Activated naive CD4-positive, alpha-beta T cell treated with anti-CD3 and anti-CD28 coated beads for 36 hours (primary cell): ENCODE measurements at regions of chr4 and their contacts with region 1.

Region 1: GRCh38 chr4:17810260-17811077 is at the starts of genes DCAF16 and NCAPG:
- DNase-seq: peak; percentile 100
- H3K4me3 Mint-ChIP-seq: peak within 1 kb of the TSS; percentile 100
- H3K27ac Mint-ChIP-seq: peak within 1 kb of the TSS; percentile 99
- H3K4me1 Mint-ChIP-seq: peaks cover 41% of the 10 kb centered on the region
- H3K27me3 Mint-ChIP-seq: no peaks in the 10 kb centered on the region
- total RNA-seq, gene DCAF16: 46.6 to 48.5 TPM
- total RNA-seq, gene NCAPG: 70.2 to 78.4 TPM

Region 2: DNA sequence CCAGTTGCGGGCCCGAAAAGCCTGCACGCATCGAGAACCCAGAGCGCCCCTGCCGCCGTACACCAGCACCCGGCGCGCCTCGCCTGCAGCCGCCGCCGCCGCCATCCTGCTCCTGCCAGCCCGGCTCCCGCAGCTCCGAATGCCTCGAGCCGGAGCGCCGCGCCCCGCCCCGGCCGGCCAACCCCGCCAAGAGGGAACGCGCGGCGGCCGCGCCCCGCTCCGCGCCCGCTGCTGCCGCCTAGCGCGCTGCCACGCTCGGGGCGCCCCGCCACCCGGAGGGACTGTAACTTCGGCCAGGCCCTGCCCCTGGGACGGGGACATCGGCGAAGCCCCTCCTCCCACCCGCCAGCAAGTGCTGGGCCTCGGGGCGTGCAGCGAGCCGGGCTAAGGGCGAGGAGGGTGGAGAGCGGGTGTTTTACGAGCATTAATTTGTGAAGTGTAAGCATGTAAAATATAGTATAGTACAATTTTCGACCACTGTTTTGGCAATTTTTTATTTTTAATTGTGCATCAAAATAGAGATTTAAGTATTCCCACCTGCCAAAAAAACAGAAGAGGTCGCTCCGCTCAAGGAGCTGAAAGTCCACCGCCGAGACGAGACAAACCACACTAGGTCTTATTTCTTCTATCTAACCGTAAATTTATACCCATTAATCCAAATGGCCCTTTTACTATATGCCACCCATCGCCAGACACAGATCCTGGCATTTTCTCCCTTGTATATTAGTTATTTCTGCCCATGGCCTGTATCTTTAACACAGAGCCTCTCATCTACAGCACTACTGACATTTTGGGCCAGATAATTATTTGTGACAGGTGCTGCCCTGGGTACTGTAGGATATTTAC is 298.3 kb before region 1 on chr4 and contains the start of gene QDPR:
- CTCF ChIA-PET with region 1: no interaction called
- intact Hi-C with region 1: loop called (anchors 1 kb)
- DNase-seq: peak; percentile 76
- H3K4me3 Mint-ChIP-seq: peak within 1 kb of the TSS; percentile 89
- H3K27ac Mint-ChIP-seq: peak within 1 kb of the TSS; percentile 63
- H3K4me1 Mint-ChIP-seq: peaks cover 21% of the 10 kb centered on the region
- H3K27me3 Mint-ChIP-seq: no peaks in the 10 kb centered on the region
- total RNA-seq, gene QDPR: 42.2 to 43.8 TPM

Region 3: DNA sequence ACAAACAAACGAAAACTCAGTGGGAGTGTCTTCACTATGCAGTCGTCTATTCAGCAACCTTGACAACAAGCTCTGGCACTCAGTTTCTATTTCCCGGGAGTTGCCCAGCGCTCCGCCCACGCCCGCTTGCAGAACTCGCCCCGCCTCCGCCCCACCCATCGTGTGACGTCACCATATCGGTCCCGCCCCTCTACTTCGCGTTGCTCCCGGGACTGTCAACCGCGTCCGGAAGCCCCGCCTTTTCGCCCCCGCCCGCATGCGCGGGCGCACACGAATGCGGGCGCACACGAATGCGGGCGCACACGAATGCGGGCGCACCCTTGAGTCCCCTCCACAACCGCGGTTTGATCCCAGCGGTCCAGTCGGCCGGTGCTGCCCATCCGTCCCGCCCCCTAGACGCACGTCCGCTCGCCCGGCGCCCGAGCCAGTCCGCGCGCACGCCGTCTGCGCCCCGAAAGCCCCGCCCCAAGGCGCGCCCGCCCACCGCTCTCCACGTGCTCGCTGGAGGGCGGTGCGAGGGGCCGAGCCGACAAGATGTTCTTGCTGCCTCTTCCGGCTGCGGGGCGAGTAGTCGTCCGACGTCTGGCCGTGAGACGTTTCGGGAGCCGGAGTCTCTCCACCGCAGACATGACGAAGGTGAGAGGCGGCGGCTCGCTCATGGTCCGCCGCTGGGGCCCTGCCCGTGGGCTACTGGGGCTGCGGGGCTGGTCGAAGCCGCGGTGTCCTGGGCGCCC is 233.4 kb before region 1 on chr4 and contains the start of gene LAP3:
- CTCF ChIA-PET with region 1: interaction called, 3 read pairs
- intact Hi-C with region 1: loop called (anchors 1 kb)
- DNase-seq: peak; percentile 99
- H3K4me3 Mint-ChIP-seq: peak within 1 kb of the TSS; percentile 89
- H3K27ac Mint-ChIP-seq: peak within 1 kb of the TSS; percentile 95
- H3K4me1 Mint-ChIP-seq: peaks cover 24% of the 10 kb centered on the region
- H3K27me3 Mint-ChIP-seq: no peaks in the 10 kb centered on the region
- total RNA-seq, gene LAP3: 109 to 111 TPM

Region 4: DNA sequence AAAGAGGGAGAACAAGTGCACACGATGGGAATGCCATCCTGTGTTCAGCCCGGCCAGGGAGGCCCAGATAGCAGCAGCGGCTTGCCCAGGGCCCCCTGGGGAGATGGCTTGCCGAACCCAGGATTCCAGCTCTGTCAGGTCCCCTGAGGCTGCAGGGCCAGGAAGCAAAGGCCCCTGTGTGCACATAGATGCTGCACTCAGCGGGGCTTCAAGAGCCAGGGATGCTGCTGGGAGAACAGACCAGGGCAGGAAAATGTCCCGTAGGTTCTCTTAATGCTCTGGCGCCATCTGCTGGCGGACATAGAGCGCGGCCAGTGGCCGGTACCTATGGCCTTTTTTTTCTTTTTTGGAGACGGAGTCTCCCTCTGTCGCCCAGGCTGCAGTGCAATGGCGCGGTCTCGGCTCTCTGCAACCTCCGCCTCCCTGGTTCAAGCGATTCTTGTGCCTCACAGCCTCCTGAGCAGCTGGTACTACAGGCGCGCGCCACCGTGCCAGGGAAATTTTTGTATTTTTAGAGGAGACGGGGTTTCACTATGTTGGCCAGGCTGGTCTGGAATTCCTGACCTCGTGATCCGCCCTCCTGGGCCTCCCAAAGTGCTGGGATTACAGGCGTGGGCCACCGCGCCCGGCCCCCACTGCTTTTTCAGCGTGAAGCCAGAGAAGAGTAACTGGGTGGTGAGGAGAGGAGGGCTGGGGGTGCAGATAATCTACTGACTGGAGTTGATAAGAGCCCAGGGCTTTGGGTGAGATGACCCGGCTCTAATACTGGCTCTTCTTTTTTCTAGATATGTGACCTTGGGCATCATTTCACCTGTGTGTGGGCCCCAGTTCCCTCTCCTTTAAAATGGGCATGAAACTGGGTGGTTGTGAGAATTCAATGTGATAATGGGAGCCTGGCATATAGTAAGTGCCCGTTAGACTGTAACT is 173.5 kb before region 1 on chr4:
- CTCF ChIA-PET with region 1: interaction called, 3 read pairs
- intact Hi-C with region 1: loop called (anchors 2 kb)
- DNase-seq: peak; percentile 82
- H3K4me3 Mint-ChIP-seq: no peak overlapping the region
- H3K27ac Mint-ChIP-seq: no peak overlapping the region
- H3K4me1 Mint-ChIP-seq: no peaks in the 10 kb centered on the region
- H3K27me3 Mint-ChIP-seq: no peaks in the 10 kb centered on the region

Region 5: DNA sequence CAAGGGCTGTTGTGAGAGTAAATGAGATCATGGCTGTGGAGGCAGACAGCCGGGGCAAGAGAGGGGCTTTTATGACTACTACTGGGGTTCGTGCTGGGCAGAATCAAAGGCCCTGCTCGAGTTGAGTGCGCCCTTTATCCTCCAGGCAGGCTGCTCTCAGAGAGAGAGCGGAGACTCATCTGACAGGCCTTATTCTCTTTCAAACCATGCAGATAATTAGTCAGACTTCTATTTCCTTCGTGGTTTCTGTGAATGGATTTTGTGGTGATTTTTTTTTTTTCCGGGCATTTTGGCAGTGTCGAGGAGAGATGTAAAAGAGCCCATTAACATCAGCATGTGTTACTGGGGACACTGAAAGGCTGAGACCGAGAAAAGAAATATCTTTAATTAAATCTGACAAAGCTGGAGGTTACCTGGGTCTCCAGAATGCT is 122.4 kb before region 1 on chr4:
- CTCF ChIA-PET with region 1: no interaction called
- intact Hi-C with region 1: no loop called
- DNase-seq: no peak
- H3K4me3 Mint-ChIP-seq: no peak overlapping the region
- H3K27ac Mint-ChIP-seq: no peak overlapping the region
- H3K4me1 Mint-ChIP-seq: no peaks in the 10 kb centered on the region
- H3K27me3 Mint-ChIP-seq: no peaks in the 10 kb centered on the region

Region 6: DNA sequence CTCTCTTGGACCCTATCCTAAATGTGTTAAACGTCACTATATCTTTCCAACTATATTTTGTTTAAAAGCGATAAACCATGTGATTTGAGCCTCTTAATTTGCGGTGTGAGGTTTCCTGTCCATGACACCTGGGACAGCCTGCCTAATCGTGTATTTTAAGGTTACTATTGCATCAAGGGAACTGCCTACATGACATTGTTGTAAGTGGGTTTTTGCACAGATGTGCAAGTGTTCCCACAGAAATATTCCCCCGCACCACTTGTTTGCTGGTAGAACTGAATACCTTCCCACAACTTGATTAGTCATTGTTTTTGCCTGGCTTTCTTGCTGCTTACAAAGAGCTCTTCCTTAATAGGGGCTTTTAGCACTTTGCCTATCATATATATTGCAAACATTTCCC is 23.9 kb before region 1 on chr4:
- CTCF ChIA-PET with region 1: interaction called, 4 read pairs
- intact Hi-C with region 1: loop called (anchors 2 kb)
- DNase-seq: no peak
- H3K4me3 Mint-ChIP-seq: no peak overlapping the region
- H3K27ac Mint-ChIP-seq: no peak overlapping the region
- H3K4me1 Mint-ChIP-seq: peaks cover 21% of the 10 kb centered on the region
- H3K27me3 Mint-ChIP-seq: peaks cover 12% of the 10 kb centered on the region

Region 7: DNA sequence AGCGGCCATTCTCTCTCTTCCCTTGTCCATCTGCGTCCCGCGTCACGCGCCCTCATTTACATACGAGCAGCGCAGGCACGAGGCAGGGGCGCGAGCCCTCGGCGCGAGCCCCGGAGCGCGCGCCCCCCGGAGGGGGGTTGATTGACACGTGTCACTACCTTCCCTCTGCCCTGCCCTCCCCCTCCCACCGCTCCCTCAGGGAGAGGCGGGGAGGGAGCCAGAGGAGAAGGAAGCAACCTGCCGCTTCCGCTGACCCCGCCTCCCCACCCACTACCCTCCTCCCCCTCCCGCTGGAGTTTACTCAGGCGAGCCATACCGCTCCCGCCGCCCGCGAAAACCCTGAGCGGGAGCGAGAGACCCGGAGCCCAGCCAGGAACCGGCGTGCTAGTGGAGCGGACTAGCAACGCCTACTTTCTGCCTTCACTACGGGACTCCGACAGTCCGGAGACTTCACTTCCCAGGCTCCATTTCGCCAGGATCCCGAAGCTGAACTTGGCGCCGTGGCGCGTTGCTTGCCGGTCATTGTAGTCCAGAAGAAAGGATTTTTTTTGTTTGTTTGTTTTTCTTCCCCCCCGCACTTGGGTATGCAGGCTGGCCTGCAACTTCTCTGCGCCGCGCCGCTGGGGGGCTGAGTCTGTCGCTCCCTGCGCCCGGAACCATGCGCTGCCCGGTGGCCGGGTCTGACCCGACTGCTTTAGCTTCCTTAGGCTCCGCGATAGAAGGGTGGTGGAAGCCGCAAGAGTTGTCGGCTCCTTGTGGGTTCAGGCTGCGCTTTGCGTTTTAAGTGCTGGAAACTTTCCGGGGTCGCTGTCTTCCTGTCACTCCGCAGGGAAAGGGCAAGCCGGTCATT is 211.5 kb after region 1 on chr4 and contains the start of gene LCORL:
- CTCF ChIA-PET with region 1: interaction called, 3 read pairs
- intact Hi-C with region 1: loop called (anchors 1 kb)
- DNase-seq: peak; percentile 89
- H3K4me3 Mint-ChIP-seq: peak within 1 kb of the TSS; percentile 98
- H3K27ac Mint-ChIP-seq: peak within 1 kb of the TSS; percentile 79
- H3K4me1 Mint-ChIP-seq: peaks cover 14% of the 10 kb centered on the region
- H3K27me3 Mint-ChIP-seq: peaks cover 16% of the 10 kb centered on the region
- total RNA-seq, gene LCORL: 8.6 to 9.4 TPM